ENCODE measurements at regions of chr5 and their contacts with region 1.

Region 1: GRCh38 chr5:18314192-18314778 is 680.0 kb downstream of the TAF11L14 start:
- DNase-seq: peak in 1 of 9 experiments; percentile 7
- ATAC-seq: no peak
- H3K4me3 ChIP-seq: no peak overlapping the region
- H3K4me3 Mint-ChIP-seq: no peak overlapping the region
- H3K27ac ChIP-seq: no peak overlapping the region
- H3K27ac Mint-ChIP-seq: no peak overlapping the region
- H3K4me1 ChIP-seq: no peaks in the 10 kb centered on the region
- H3K4me1 Mint-ChIP-seq: no peaks in the 10 kb centered on the region
- H3K27me3 ChIP-seq: no peaks in the 10 kb centered on the region
- H3K27me3 Mint-ChIP-seq: no peaks in the 10 kb centered on the region
- CTCF ChIP-seq: peak; percentile 38

Region 2: GRCh38 chr5:17216176-17216973 is 1097.9 kb before region 1 on chr5:
- CTCF ChIA-PET with region 1: no interaction called
- POLR2A ChIA-PET with region 1: no interaction called
- intact Hi-C with region 1: loop called in 1 of 2 experiments (anchors 5 kb)
- DNase-seq: peak in 3 of 9 experiments; percentile 11 to 45 (median 16)
- ATAC-seq: no peak
- H3K4me3 ChIP-seq: no peak overlapping the region
- H3K4me3 Mint-ChIP-seq: peak overlapping the region; percentile 58
- H3K27ac ChIP-seq: no peak overlapping the region
- H3K27ac Mint-ChIP-seq: no peak overlapping the region
- H3K4me1 ChIP-seq: peaks cover 10% of the 10 kb centered on the region
- H3K4me1 Mint-ChIP-seq: peaks cover 13% of the 10 kb centered on the region
- H3K27me3 ChIP-seq: peaks cover 14 to 17% of the 10 kb centered on the region in 2 experiments
- H3K27me3 Mint-ChIP-seq: peaks cover 37% of the 10 kb centered on the region
- CTCF ChIP-seq: no peak

Measured in CD8-positive, alpha-beta T cell (primary cell).